Activated CD4-positive, alpha-beta memory T cell treated with anti-CD3 and anti-CD28 coated beads for 36 hours (primary cell): ENCODE measurements at regions of chr10 and their contacts with region 1.

Region 1: DNA sequence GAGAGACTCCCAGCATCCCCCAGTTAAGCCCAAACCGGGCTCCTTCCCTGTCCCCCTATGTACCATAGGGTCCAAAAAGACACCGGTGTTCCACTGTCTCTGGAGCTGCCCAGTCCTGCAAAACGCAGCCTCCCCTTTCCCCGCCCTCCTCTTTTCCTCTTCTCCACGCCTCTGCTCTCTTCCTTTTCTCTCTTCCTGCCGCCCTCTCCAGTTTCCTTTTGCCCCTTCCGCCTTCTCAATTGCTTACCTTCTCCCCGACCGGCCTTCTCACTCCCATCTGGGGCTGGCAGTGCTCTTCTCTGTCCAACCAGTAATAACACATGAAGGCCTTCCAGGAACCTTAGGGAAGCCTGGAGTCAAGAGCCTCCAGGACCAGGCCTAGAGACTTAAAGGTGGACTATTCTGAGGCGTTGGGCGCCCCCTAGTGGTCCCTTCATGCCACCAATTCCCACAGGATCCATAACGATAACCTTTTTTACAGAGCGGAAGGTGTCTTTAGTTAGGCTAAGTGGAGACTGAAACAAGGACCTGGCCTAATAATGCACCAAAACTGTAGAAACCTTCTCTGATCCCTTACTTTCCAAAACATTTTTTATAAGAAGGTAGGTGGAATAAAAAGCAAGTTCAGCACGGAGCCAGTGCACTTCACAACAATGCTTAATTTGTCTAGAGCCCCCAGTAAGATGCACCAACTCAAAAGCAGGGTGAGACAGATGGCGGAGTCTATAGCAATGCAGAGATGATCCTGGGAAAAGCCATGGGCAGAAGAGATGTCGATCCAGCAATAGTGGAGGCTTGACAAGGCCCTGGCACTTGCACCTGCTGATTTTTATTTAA is 27.2 kb upstream of the MSRB2 start:
- DNase-seq: peak; percentile 76
- H3K4me3 Mint-ChIP-seq: no peak overlapping the region
- H3K27ac Mint-ChIP-seq: no peak overlapping the region
- H3K4me1 Mint-ChIP-seq: no peaks in the 10 kb centered on the region
- H3K27me3 Mint-ChIP-seq: peaks cover 1% of the 10 kb centered on the region

Region 2: GRCh38 chr10:22550732-22551131 is 517.4 kb before region 1 on chr10:
- CTCF ChIA-PET with region 1: no interaction called
- POLR2A ChIA-PET with region 1: no interaction called
- intact Hi-C with region 1: loop called (anchors 10 kb)
- DNase-seq: peak; percentile 74
- H3K4me3 Mint-ChIP-seq: no peak overlapping the region
- H3K27ac Mint-ChIP-seq: peak overlapping the region; percentile 5
- H3K4me1 Mint-ChIP-seq: peaks cover 17% of the 10 kb centered on the region
- H3K27me3 Mint-ChIP-seq: no peaks in the 10 kb centered on the region